CD4-positive, alpha-beta memory T cell (primary cell): ENCODE measurements at regions of chr12 and their contacts with region 1.

Region 1: GRCh38 chr12:31989571-31990362 is 30.6 kb downstream of the RESF1 start:
- DNase-seq: no peak
- H3K4me3 ChIP-seq: no peak overlapping the region
- H3K4me3 Mint-ChIP-seq: peak overlapping the region in 1 of 8 donors; percentile 58
- H3K27ac ChIP-seq: no peak overlapping the region
- H3K27ac Mint-ChIP-seq: peak overlapping the region in 5 of 7 donors; percentile 14 to 84 (median 63)
- H3K4me1 ChIP-seq: peaks cover 7% of the 10 kb centered on the region
- H3K4me1 Mint-ChIP-seq: peaks cover 20 to 28% (median 27%) of the 10 kb centered on the region in 4 donors
- H3K27me3 ChIP-seq: no peaks in the 10 kb centered on the region
- H3K27me3 Mint-ChIP-seq: no peaks in the 10 kb centered on the region

Region 2: DNA sequence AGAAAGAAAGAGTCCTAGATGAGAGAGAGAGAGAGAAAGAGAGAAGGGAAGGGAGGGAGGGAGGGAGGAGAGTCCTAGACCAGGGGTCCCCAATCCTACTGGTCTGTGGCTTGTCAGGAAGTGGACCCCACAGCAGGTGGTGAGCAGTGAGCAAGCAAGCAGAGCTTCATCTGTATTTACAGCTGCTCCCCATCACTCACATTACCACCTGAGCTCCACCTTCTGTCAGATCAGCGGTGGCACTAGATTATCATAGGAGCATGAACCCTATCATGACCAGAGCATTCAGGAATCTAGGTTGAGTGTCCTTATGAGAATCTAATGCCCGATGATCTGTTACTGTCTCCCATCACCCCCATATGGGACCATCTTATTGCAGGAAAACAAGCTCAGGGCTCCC is 221.7 kb before region 1 on chr12:
- CTCF ChIA-PET with region 1: no interaction called
- POLR2A ChIA-PET with region 1: no interaction called
- intact Hi-C with region 1: no loop called
- DNase-seq: no peak
- H3K4me3 ChIP-seq: no peak overlapping the region
- H3K4me3 Mint-ChIP-seq: no peak overlapping the region
- H3K27ac ChIP-seq: no peak overlapping the region
- H3K27ac Mint-ChIP-seq: peak overlapping the region in 5 of 7 donors; percentile 7 to 91 (median 66)
- H3K4me1 ChIP-seq: no peaks in the 10 kb centered on the region
- H3K4me1 Mint-ChIP-seq: peaks cover 5 to 20% (median 17%) of the 10 kb centered on the region in 4 donors
- H3K27me3 ChIP-seq: no peaks in the 10 kb centered on the region
- H3K27me3 Mint-ChIP-seq: no peaks in the 10 kb centered on the region

Region 3: GRCh38 chr12:31966558-31967205 is 23.1 kb before region 1 on chr12:
- CTCF ChIA-PET with region 1: interaction called, 5 read pairs
- POLR2A ChIA-PET with region 1: interaction called, 55 read pairs
- intact Hi-C with region 1: loop called (anchors 2 kb)
- DNase-seq: no peak
- H3K4me3 ChIP-seq: peak overlapping the region; percentile 34 to 39
- H3K4me3 Mint-ChIP-seq: peak overlapping the region; percentile 93 to 98 (median 96)
- H3K27ac ChIP-seq: peak overlapping the region; percentile 35
- H3K27ac Mint-ChIP-seq: peak overlapping the region; percentile 85 to 95 (median 94)
- H3K4me1 ChIP-seq: peaks cover 94% of the 10 kb centered on the region
- H3K4me1 Mint-ChIP-seq: peaks cover 60 to 95% (median 73%) of the 10 kb centered on the region in 4 donors
- H3K27me3 ChIP-seq: no peaks in the 10 kb centered on the region
- H3K27me3 Mint-ChIP-seq: no peaks in the 10 kb centered on the region

Region 4: DNA sequence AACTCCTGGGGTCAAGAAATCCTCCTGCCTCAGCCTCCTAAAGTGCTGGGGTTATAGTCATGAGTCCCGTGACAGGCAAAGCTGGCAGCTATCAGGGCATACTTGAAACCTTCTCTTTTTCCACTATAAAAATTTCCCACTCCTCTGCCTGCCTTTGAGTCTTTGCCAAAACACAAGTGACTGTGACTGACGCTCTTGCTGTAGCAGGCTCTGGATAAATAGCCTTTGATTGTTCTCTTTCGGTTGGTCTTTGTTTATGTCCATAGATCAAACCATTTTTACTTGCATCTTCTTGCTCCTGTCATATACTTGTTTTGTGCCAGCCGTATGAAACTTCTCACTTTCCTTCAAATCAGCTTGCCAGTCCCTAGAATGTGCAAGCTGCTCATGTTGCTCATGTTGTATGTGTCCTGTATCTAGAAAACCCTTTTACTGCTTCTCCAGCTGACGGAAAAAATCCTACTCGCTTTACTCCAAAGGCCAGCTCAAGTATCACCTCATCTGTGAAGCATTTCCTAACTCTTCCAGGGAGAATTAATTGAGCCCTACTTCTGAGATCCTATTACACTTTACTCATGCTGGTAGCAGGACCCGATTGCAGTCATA is 42.5 kb after region 1 on chr12:
- CTCF ChIA-PET with region 1: no interaction called
- POLR2A ChIA-PET with region 1: no interaction called
- intact Hi-C with region 1: no loop called
- DNase-seq: no peak
- H3K4me3 ChIP-seq: no peak overlapping the region
- H3K4me3 Mint-ChIP-seq: no peak overlapping the region
- H3K27ac ChIP-seq: no peak overlapping the region
- H3K27ac Mint-ChIP-seq: peak overlapping the region in 2 of 7 donors; percentile 10 to 19
- H3K4me1 ChIP-seq: no peaks in the 10 kb centered on the region
- H3K4me1 Mint-ChIP-seq: peaks cover 0 to 2% (median 0%) of the 10 kb centered on the region in 4 donors
- H3K27me3 ChIP-seq: no peaks in the 10 kb centered on the region
- H3K27me3 Mint-ChIP-seq: no peaks in the 10 kb centered on the region

Region 5: GRCh38 chr12:32089586-32089985 is 99.8 kb after region 1 on chr12:
- CTCF ChIA-PET with region 1: no interaction called
- POLR2A ChIA-PET with region 1: no interaction called
- intact Hi-C with region 1: no loop called
- DNase-seq: no peak
- H3K4me3 ChIP-seq: no peak overlapping the region
- H3K4me3 Mint-ChIP-seq: no peak overlapping the region
- H3K27ac ChIP-seq: no peak overlapping the region
- H3K27ac Mint-ChIP-seq: no peak overlapping the region
- H3K4me1 ChIP-seq: no peaks in the 10 kb centered on the region
- H3K4me1 Mint-ChIP-seq: no peaks in the 10 kb centered on the region
- H3K27me3 ChIP-seq: no peaks in the 10 kb centered on the region
- H3K27me3 Mint-ChIP-seq: no peaks in the 10 kb centered on the region